Naive thymus-derived CD4-positive, alpha-beta T cell (primary cell): ENCODE measurements at regions of chr13 and their contacts with region 1.

Region 1: GRCh38 chr13:30673669-30674521 is 56.2 kb downstream of the USPL1 start:
- DNase-seq: peak; percentile 79 to 94 (median 86)
- ATAC-seq: peak; percentile 97
- H3K4me3 ChIP-seq: peak overlapping the region; percentile 67
- H3K4me3 Mint-ChIP-seq: peak overlapping the region; percentile 72 to 90 (median 88)
- H3K27ac ChIP-seq: peak overlapping the region; percentile 38
- H3K27ac Mint-ChIP-seq: peak overlapping the region; percentile 81 to 98 (median 91)
- H3K4me1 ChIP-seq: peaks cover 0 to 5% of the 10 kb centered on the region in 2 donors
- H3K4me1 Mint-ChIP-seq: peaks cover 2 to 32% (median 15%) of the 10 kb centered on the region in 7 donors
- H3K27me3 ChIP-seq: no peaks in the 10 kb centered on the region
- H3K27me3 Mint-ChIP-seq: peaks cover 0 to 36% (median 0%) of the 10 kb centered on the region in 5 donors

Region 2: GRCh38 chr13:30654430-30654829 is 19.5 kb before region 1 on chr13:
- CTCF ChIA-PET with region 1: no interaction called
- POLR2A ChIA-PET with region 1: interaction called, 3 read pairs
- intact Hi-C with region 1: loop called in 1 of 2 experiments (anchors 1 kb)
- DNase-seq: no peak
- ATAC-seq: peak; percentile 76
- H3K4me3 ChIP-seq: no peak overlapping the region
- H3K4me3 Mint-ChIP-seq: peak overlapping the region in 2 of 10 donors; percentile 6 to 82
- H3K27ac ChIP-seq: no peak overlapping the region
- H3K27ac Mint-ChIP-seq: peak overlapping the region in 8 of 9 donors; percentile 17 to 93 (median 57)
- H3K4me1 ChIP-seq: peaks cover 0 to 8% of the 10 kb centered on the region in 2 donors
- H3K4me1 Mint-ChIP-seq: peaks cover 7 to 44% (median 37%) of the 10 kb centered on the region in 7 donors
- H3K27me3 ChIP-seq: no peaks in the 10 kb centered on the region
- H3K27me3 Mint-ChIP-seq: no peaks in the 10 kb centered on the region

Region 3: GRCh38 chr13:31242916-31243315 is 569.0 kb after region 1 on chr13:
- CTCF ChIA-PET with region 1: no interaction called
- POLR2A ChIA-PET with region 1: no interaction called
- intact Hi-C with region 1: no loop called
- DNase-seq: no peak
- ATAC-seq: no peak
- H3K4me3 ChIP-seq: no peak overlapping the region
- H3K4me3 Mint-ChIP-seq: no peak overlapping the region
- H3K27ac ChIP-seq: no peak overlapping the region
- H3K27ac Mint-ChIP-seq: no peak overlapping the region
- H3K4me1 ChIP-seq: no peaks in the 10 kb centered on the region
- H3K4me1 Mint-ChIP-seq: no peaks in the 10 kb centered on the region
- H3K27me3 ChIP-seq: no peaks in the 10 kb centered on the region
- H3K27me3 Mint-ChIP-seq: no peaks in the 10 kb centered on the region